CD4-positive, alpha-beta T cell (primary cell): ENCODE measurements at regions of chr5 and their contacts with region 1.

Region 1: GRCh38 chr5:146130440-146131045 is 25.2 kb upstream of the PLAC8L1 start:
- DNase-seq: peak in 3 of 14 experiments; percentile 23 to 27 (median 25)
- ATAC-seq: no peak
- H3K4me3 ChIP-seq: no peak overlapping the region
- H3K4me3 Mint-ChIP-seq: no peak overlapping the region
- H3K27ac ChIP-seq: no peak overlapping the region
- H3K27ac Mint-ChIP-seq: no peak overlapping the region
- H3K4me1 ChIP-seq: no peaks in the 10 kb centered on the region
- H3K4me1 Mint-ChIP-seq: no peaks in the 10 kb centered on the region
- H3K27me3 ChIP-seq: no peaks in the 10 kb centered on the region
- H3K27me3 Mint-ChIP-seq: no peaks in the 10 kb centered on the region
- CTCF ChIP-seq: peak; percentile 54

Region 2: DNA sequence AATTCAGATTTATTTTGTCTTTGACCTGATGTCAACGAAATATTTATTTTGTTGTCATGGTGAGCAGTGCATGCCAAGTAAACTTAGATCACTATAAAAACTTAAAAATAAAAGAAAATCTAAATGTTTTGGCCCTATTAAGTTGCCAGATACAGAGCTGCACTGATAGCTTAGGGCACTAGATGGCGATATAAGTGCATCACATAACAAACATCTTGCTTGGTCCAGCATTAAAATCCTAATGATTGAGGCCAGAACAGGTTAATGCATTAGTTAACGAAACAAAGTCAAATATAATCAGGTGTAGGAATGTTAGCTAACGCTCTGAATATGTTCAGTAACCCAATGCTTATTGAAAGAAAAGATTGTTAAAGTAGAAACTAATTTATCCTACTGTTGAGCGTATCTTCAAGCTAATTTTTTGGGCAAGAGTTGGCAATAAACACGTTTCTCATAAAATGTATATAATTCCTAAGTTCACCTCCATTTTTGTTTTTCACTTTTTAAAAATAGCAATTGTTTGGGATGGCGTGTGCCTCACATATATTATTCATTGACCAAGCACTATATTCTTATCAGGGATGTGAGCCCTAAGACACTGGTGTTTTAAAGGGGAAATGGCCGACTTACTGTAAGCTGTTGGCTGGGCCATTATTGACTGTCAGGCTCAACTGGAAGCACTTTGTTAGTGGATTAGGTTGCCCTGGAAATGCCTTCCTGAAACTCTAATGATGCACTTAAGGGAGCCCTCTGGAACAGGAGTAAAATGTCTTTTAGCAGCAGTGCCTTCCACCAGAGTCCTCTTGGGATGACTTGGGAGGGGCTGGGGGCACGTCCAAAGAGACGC is 1926.6 kb before region 1 on chr5:
- CTCF ChIA-PET with region 1: interaction called, 3 read pairs
- POLR2A ChIA-PET with region 1: no interaction called
- intact Hi-C with region 1: loop called in 1 of 2 experiments (anchors 5 kb)
- DNase-seq: peak in 8 of 14 experiments; percentile 5 to 76 (median 39)
- ATAC-seq: peak; percentile 55
- H3K4me3 ChIP-seq: no peak overlapping the region
- H3K4me3 Mint-ChIP-seq: no peak overlapping the region
- H3K27ac ChIP-seq: no peak overlapping the region
- H3K27ac Mint-ChIP-seq: no peak overlapping the region
- H3K4me1 ChIP-seq: peaks cover 6% of the 10 kb centered on the region
- H3K4me1 Mint-ChIP-seq: peaks cover 4% of the 10 kb centered on the region
- H3K27me3 ChIP-seq: peaks cover 25 to 47% of the 10 kb centered on the region in 2 experiments
- H3K27me3 Mint-ChIP-seq: peaks cover 83% of the 10 kb centered on the region
- CTCF ChIP-seq: peak; percentile 94

Region 3: GRCh38 chr5:145697251-145697990 is 433.1 kb before region 1 on chr5:
- CTCF ChIA-PET with region 1: no interaction called
- POLR2A ChIA-PET with region 1: no interaction called
- intact Hi-C with region 1: loop called in 1 of 2 experiments (anchors 5 kb)
- DNase-seq: peak in 3 of 14 experiments; percentile 9 to 13 (median 10)
- ATAC-seq: no peak
- H3K4me3 ChIP-seq: no peak overlapping the region
- H3K4me3 Mint-ChIP-seq: no peak overlapping the region
- H3K27ac ChIP-seq: no peak overlapping the region
- H3K27ac Mint-ChIP-seq: no peak overlapping the region
- H3K4me1 ChIP-seq: no peaks in the 10 kb centered on the region
- H3K4me1 Mint-ChIP-seq: no peaks in the 10 kb centered on the region
- H3K27me3 ChIP-seq: no peaks in the 10 kb centered on the region
- H3K27me3 Mint-ChIP-seq: peaks cover 7% of the 10 kb centered on the region
- CTCF ChIP-seq: no peak

Region 4: GRCh38 chr5:146079695-146080361 is 50.7 kb before region 1 on chr5:
- CTCF ChIA-PET with region 1: no interaction called
- POLR2A ChIA-PET with region 1: no interaction called
- intact Hi-C with region 1: no loop called
- DNase-seq: peak in 3 of 14 experiments; percentile 2 to 23 (median 15)
- ATAC-seq: no peak
- H3K4me3 ChIP-seq: no peak overlapping the region
- H3K4me3 Mint-ChIP-seq: no peak overlapping the region
- H3K27ac ChIP-seq: no peak overlapping the region
- H3K27ac Mint-ChIP-seq: no peak overlapping the region
- H3K4me1 ChIP-seq: peaks cover 2% of the 10 kb centered on the region
- H3K4me1 Mint-ChIP-seq: peaks cover 11% of the 10 kb centered on the region
- H3K27me3 ChIP-seq: peaks cover 0 to 4% of the 10 kb centered on the region in 2 experiments
- H3K27me3 Mint-ChIP-seq: peaks cover 16% of the 10 kb centered on the region
- CTCF ChIP-seq: no peak